ENCODE measurements at regions of chr1 and their contacts with region 1.

Region 1: DNA sequence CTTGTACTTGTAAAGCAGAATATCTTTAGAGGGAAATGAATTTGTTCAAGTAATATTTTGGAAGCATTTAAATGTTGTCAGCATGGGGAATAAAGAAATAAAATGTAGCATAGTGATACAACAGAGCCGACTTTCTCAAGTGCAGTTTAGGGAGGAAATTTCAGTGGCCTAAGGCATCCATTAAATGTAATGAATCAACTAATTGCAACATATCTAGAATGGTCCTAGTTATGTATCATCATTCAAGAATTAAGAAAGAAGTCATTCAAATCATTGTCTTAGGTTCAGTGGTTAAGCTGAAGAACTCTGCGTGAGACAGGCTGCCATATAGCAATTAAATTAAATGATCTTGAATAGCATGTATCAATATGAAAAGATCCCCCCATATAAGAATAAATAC is 360.7 kb downstream of the TBX15 start:
- DNase-seq: no peak
- H3K4me3 ChIP-seq: no peak overlapping the region
- CTCF ChIP-seq: no peak

Region 2: GRCh38 chr1:118556921-118557320 is 70.5 kb before region 1 on chr1:
- in situ Hi-C with region 1: loop called (anchors 5 kb)
- DNase-seq: no peak
- H3K4me3 ChIP-seq: no peak overlapping the region
- CTCF ChIP-seq: no peak

Region 3: DNA sequence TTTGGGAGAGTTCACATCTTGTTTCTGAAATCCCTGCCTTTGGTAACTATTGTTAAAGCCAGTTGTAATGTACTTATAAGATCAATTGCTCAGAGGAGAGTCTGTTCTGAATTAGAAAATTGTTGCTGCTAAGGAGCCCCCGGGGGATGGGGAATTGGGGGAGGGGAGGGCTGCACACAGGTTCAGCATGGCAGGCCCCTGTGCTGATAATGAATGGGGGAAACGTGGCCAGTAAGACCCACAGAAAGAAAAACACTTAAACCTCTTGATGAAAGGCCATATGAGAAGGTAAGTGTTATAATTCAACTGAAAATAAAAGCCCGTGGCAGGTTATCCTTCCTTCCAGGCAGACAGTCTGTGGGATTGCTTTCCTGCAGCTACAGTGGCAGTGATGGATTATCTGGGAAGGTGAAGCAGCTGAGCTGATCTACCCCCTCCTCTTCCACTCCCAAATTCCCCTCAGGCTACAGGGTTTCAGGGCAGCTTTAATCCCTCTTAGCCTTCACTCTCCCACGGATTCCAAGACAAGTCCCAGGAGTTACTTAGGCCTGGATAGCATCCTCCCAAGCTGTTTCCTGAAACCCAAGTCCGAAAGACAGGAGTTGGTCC is 38.1 kb before region 1 on chr1:
- in situ Hi-C with region 1: loop called (anchors 5 kb)
- DNase-seq: no peak
- H3K4me3 ChIP-seq: no peak overlapping the region
- CTCF ChIP-seq: no peak